Transverse colon (tissue), 4 donors: ENCODE measurements at regions of chr4 and their contacts with region 1.

Region 1: GRCh38 chr4:151604238-151604637 is 156.6 kb downstream of the GATB start:
- DNase-seq: no peak
- H3K4me3 ChIP-seq: no peak overlapping the region
- H3K27ac ChIP-seq: no peak overlapping the region
- H3K4me1 ChIP-seq: no peaks in the 10 kb centered on the region
- H3K27me3 ChIP-seq: no peaks in the 10 kb centered on the region
- CTCF ChIP-seq: peak; percentile 16 to 35 (median 20)
- EP300 ChIP-seq: no peak
- POLR2A ChIP-seq: no peak

Region 2: DNA sequence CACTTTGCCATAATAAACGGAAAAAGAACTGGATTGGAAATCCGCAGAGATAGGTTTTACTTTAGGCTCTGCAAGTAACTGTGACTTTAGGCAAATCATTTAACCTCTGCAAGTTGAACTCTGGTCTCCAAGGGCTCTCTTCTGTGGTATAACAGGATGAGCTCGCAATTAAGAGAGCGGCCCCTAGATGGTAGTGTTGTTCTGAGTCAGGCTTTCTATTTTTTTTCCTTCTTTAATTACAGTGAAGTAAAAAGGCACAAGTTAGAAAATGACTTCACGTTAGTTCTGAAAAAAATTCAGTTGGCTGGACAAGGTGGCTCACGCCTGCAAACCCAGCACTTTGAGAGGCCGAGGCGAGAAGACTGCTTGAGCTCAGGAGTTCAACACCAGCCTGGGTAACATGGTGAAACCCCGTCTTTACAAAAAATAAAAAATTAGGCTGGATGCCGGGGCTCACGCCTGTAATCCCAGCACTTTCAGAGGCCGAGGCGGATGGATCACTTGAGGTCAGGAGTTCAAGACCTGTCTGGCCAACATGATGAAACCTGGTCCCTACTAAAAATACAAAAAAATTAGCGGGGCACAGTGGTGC is 486.8 kb before region 1 on chr4:
- in situ Hi-C with region 1: loop called in 2 of 4 experiments (anchors 25 kb)
- intact Hi-C with region 1: no loop called
- DNase-seq: peak; percentile 63
- H3K4me3 ChIP-seq: no peak overlapping the region
- H3K27ac ChIP-seq: peak overlapping the region in 1 of 4 donors; percentile 14
- H3K4me1 ChIP-seq: no peaks in the 10 kb centered on the region
- H3K27me3 ChIP-seq: no peaks in the 10 kb centered on the region
- CTCF ChIP-seq: peak; percentile 55 to 72 (median 63)
- EP300 ChIP-seq: no peak
- POLR2A ChIP-seq: no peak